ENCODE measurements at regions of chr15 and their contacts with region 1.

Region 1: DNA sequence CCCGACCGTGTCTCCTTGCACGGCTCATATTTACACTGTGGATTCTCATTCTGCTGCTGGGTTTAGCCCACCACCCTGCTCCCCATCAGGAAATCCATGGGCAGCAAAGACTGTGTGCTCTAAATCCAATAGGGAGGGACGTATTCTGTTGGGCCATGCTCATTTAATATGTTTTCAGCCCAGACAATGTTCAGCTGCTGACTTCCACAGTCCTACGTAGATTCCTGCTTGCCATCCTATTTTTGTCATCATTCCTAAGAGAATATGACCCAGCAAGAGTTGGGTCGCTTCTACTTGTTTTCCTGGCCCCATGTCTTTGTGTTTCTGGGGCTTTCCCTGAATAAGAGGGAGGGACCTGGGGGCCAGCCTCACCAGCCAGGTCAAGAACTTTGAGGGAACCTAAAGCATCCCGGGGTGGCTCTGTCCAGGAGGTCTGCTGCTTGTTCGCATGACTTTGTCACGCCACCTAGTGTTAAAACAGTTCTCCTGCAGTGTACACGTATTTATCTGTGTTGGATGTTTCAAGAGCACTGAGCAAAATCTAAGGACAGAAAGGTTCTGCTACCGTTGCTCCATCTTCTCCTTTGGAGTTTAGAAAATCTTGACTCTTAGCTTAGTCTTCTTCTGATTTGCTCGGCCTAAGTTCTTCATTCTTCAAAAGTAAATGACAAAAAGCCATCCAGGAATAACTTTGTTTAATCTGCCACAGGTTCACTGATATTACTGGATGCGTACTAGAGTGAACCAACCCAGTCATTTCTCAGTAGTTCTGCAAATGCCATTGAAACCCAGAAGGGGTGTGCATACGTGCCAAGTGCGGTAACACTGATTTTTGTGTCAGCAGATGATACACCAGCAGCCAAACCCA is 79.8 kb upstream of the NR2E3 start:
- DNase-seq: peak; percentile 57
- H3K4me3 Mint-ChIP-seq: no peak overlapping the region
- H3K27ac Mint-ChIP-seq: no peak overlapping the region
- H3K4me1 Mint-ChIP-seq: peaks cover 7% of the 10 kb centered on the region
- H3K27me3 Mint-ChIP-seq: no peaks in the 10 kb centered on the region
- CTCF ChIP-seq: peak; percentile 87

Region 2: DNA sequence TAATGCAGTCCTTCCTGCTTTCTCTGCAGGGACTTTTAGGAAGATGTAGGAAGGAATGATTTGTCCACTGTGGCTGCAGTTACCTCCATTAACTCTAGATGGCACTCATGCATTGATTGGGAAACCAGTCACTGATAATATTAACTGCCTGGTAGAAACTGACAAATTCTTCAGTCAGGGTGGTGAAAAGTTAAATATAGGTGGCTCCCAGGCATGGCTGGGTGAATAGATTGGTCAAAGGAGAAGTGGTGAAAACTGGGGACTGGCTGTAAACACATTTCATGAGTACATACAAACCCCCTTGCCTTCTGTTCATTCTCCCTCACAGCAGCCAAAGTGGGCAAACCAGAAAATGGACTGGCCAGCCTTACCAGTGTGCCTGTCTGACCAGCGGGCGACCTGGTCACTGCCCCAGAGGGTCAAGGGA is 281.8 kb before region 1 on chr15:
- CTCF ChIA-PET with region 1: no interaction called
- intact Hi-C with region 1: loop called (anchors 1 kb)
- DNase-seq: peak; percentile 72
- H3K4me3 Mint-ChIP-seq: no peak overlapping the region
- H3K27ac Mint-ChIP-seq: no peak overlapping the region
- H3K4me1 Mint-ChIP-seq: no peaks in the 10 kb centered on the region
- H3K27me3 Mint-ChIP-seq: no peaks in the 10 kb centered on the region
- CTCF ChIP-seq: peak; percentile 73

Region 3: DNA sequence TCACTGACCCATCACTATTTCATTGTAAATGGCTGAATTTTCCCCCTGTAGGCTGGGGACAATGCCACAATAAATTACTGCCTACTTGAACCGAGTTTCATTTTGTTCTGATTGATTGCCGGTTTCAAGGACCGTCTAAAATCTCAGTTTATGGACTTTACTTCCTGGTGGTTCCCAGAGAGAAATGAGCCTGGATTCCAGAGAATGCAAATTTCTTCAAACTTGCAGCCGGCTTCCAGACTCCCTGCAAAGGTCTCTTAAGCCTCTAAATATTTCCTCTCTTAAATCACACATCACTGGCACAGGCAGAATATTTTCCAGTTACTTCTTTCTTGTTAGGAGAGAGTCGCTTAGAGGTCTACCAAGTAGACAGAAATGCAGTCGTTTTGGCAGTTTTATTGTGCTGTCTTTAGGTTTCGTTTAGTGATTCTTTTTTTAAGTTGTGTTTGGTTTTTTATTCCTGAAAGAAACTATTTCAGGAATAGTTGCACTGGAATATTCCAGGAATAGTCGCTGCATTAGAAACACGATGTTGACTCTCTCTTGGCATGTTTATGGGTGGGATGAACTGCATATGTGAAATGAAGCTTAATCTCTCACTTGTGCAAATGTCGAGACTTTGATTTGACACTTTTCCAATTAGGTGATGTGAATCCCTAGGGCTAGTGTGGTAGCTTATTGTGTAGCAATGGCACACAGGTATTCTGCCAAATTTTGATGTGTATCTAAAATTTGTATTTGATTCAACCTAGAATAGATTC is 204.3 kb before region 1 on chr15:
- CTCF ChIA-PET with region 1: no interaction called
- intact Hi-C with region 1: loop called (anchors 5 kb)
- DNase-seq: peak; percentile 9
- H3K4me3 Mint-ChIP-seq: no peak overlapping the region
- H3K27ac Mint-ChIP-seq: no peak overlapping the region
- H3K4me1 Mint-ChIP-seq: peaks cover 25% of the 10 kb centered on the region
- H3K27me3 Mint-ChIP-seq: no peaks in the 10 kb centered on the region
- CTCF ChIP-seq: no peak

Region 4: GRCh38 chr15:71575474-71576045 is 155.0 kb before region 1 on chr15:
- CTCF ChIA-PET with region 1: interaction called, 8 read pairs
- intact Hi-C with region 1: loop called (anchors 1 kb)
- DNase-seq: no peak
- H3K4me3 Mint-ChIP-seq: no peak overlapping the region
- H3K27ac Mint-ChIP-seq: no peak overlapping the region
- H3K4me1 Mint-ChIP-seq: peaks cover 11% of the 10 kb centered on the region
- H3K27me3 Mint-ChIP-seq: no peaks in the 10 kb centered on the region
- CTCF ChIP-seq: peak; percentile 62

Region 5: DNA sequence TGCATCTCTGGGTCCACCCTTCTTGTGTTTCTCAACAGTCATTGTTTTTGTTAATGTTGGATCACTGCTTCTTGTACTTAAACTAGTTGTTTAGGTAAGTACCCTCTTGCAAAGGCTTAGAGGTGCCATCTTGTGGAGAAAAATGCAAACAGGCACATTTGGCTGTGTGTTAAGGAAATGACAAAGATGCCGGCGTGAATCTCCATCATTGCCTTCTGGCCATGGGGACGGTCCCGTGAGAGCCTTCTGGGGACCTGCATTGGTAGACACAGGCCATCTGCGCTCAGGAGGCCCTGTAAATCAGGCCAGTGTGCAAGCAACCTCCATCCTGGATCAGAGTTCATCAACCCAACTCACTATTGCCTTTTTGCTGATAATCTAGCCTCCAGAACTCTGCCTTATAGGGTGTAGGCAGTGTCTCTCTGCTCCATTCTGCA is 78.7 kb before region 1 on chr15:
- CTCF ChIA-PET with region 1: no interaction called
- intact Hi-C with region 1: loop called (anchors 5 kb)
- DNase-seq: peak; percentile 44
- H3K4me3 Mint-ChIP-seq: no peak overlapping the region
- H3K27ac Mint-ChIP-seq: no peak overlapping the region
- H3K4me1 Mint-ChIP-seq: peaks cover 7% of the 10 kb centered on the region
- H3K27me3 Mint-ChIP-seq: no peaks in the 10 kb centered on the region
- CTCF ChIP-seq: no peak

Measured in Calu3 (cell line).